Caco-2 (cell line): ENCODE measurements at regions of chr4 and their contacts with region 1.

Region 1: DNA sequence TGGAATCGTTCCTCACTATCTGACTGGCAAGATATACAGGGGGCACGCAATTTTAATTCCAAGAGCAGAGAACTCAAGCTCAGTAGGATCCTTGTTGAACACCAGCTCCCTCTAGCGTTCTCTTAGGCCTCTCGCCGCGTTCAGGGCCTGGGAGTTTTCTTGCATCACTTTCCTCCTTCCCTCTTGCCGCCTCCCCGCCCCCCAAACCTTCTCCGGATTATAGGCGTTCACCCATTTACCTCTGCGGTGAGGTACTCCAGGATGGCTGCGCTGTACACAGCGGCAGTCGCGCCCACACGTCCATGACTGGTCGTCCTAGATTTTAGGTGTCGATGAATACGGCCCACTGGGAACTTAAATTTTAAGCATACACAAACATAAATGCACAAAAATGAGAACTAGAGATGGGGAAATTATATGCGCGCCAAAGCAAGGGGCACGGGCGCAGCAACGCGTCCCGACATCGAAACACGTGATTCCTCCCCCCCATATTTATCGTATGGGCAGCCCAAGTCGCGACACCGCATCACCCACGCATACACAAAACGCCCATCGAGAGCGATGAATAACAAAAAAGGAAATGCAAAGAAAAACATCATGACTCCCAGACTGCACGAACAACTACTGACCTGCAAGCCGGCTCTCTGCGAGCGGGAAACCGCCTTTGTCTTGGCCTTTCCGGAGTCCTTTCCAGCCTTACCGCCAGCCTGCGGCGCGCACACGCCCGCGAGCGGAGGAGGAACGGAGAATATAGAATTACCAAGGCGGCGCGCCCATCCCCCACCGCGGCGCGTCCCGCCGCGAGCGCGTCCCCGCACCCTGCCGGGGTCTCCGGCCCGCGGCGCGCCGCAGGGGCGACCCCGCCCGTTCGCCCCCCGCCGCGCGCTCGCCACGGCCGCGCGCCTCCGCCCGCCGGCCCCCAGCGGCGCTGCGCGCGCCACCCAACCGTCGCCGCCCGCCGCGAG is 759 bp downstream of the H2AZ1 start:
- DNase-seq: peak; percentile 91 to 94
- H3K4me3 ChIP-seq: peak overlapping the region; percentile 72
- H3K4me3 Mint-ChIP-seq: no peak overlapping the region
- H3K27ac Mint-ChIP-seq: no peak overlapping the region
- H3K4me1 ChIP-seq: peaks cover 16% of the 10 kb centered on the region; the same call in 1 of the 2 replicates
- H3K4me1 Mint-ChIP-seq: no peaks in the 10 kb centered on the region
- H3K27me3 ChIP-seq: no peaks in the 10 kb centered on the region
- H3K27me3 Mint-ChIP-seq: no peaks in the 10 kb centered on the region
- CTCF ChIP-seq: peak; percentile 60 to 86

Region 2: GRCh38 chr4:99875072-99875471 is 74.2 kb before region 1 on chr4:
- CTCF ChIA-PET with region 1: no interaction called
- POLR2A ChIA-PET with region 1: no interaction called
- intact Hi-C with region 1: no loop called
- DNase-seq: peak in 1 of 2 experiments; percentile 15
- H3K4me3 ChIP-seq: no peak overlapping the region
- H3K4me3 Mint-ChIP-seq: no peak overlapping the region
- H3K27ac Mint-ChIP-seq: no peak overlapping the region
- H3K4me1 ChIP-seq: no peaks in the 10 kb centered on the region
- H3K4me1 Mint-ChIP-seq: no peaks in the 10 kb centered on the region
- H3K27me3 ChIP-seq: no peaks in the 10 kb centered on the region
- H3K27me3 Mint-ChIP-seq: no peaks in the 10 kb centered on the region
- CTCF ChIP-seq: no peak

Region 3: GRCh38 chr4:99894161-99894997 is 54.9 kb before region 1 on chr4 and contains the start of gene LAMTOR3:
- CTCF ChIA-PET with region 1: interaction called, 8 read pairs
- POLR2A ChIA-PET with region 1: interaction called, 7 read pairs
- intact Hi-C with region 1: loop called (anchors 1 kb)
- DNase-seq: peak; percentile 88 to 90
- H3K4me3 ChIP-seq: peak within 1 kb of the TSS; percentile 78
- H3K4me3 Mint-ChIP-seq: peak within 1 kb of the TSS; percentile 96
- H3K27ac Mint-ChIP-seq: peak within 1 kb of the TSS; percentile 96
- H3K4me1 ChIP-seq: peaks cover 10% of the 10 kb centered on the region; the same call in 1 of the 2 replicates
- H3K4me1 Mint-ChIP-seq: peaks cover 7% of the 10 kb centered on the region
- H3K27me3 ChIP-seq: no peaks in the 10 kb centered on the region
- H3K27me3 Mint-ChIP-seq: no peaks in the 10 kb centered on the region
- CTCF ChIP-seq: no peak
- total RNA-seq, gene LAMTOR3: 33.6 and 34.0 TPM in 2 replicates

Region 4: GRCh38 chr4:100340512-100341485 is 391.5 kb after region 1 on chr4:
- CTCF ChIA-PET with region 1: no interaction called
- POLR2A ChIA-PET with region 1: no interaction called
- intact Hi-C with region 1: no loop called
- DNase-seq: no peak
- H3K4me3 ChIP-seq: no peak overlapping the region
- H3K4me3 Mint-ChIP-seq: no peak overlapping the region
- H3K27ac Mint-ChIP-seq: no peak overlapping the region
- H3K4me1 ChIP-seq: no peaks in the 10 kb centered on the region
- H3K4me1 Mint-ChIP-seq: no peaks in the 10 kb centered on the region
- H3K27me3 ChIP-seq: no peaks in the 10 kb centered on the region
- H3K27me3 Mint-ChIP-seq: no peaks in the 10 kb centered on the region
- CTCF ChIP-seq: no peak